Activated CD8-positive, alpha-beta memory T cell treated with anti-CD3 and anti-CD28 coated beads, Interleukin-2, amount 10 ng/mL, durations not matched to agents 7 days and 5 days (primary cell): ENCODE measurements at regions of chr10 and their contacts with region 1.

Region 1: DNA sequence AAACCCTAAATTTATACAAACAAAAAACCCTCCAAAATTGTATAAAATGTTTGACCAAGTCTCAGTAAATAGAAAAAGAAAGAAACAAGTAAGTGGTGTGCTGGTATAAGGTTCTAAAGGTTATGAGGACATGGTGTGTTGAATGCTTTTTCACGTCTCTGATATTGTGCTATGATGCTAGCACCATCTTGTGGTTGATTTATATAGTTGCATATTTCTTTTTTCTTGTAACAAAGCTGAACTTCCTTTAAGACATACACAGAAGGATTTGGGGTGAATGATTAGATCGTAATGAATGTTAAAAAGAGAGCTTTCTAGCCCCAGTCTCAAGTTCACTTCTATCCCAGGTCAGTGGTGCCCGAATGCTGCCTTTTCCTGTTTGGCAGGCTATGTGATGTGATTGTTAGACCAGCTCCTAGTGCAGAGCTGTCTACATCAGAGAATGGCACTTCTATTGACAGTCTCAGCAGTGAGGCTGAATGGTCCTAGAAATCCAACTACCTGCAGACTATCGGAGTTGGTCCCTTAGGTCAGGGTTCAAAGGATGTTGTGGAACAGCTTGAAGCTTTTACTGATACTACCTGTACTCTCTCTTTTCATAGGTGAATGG is 25.0 kb downstream of the VTI1A start:
- DNase-seq: no peak
- ATAC-seq: peak; percentile 67
- H3K4me3 Mint-ChIP-seq: no peak overlapping the region
- H3K27ac Mint-ChIP-seq: no peak overlapping the region
- H3K4me1 Mint-ChIP-seq: peaks cover 4% of the 10 kb centered on the region
- H3K27me3 Mint-ChIP-seq: no peaks in the 10 kb centered on the region

Region 2: GRCh38 chr10:112082120-112082519 is 389.9 kb before region 1 on chr10:
- CTCF ChIA-PET with region 1: no interaction called
- DNase-seq: no peak
- ATAC-seq: no peak
- H3K4me3 Mint-ChIP-seq: no peak overlapping the region
- H3K27ac Mint-ChIP-seq: no peak overlapping the region
- H3K4me1 Mint-ChIP-seq: no peaks in the 10 kb centered on the region
- H3K27me3 Mint-ChIP-seq: peaks cover 9% of the 10 kb centered on the region

Region 3: GRCh38 chr10:112361951-112362751 is 109.8 kb before region 1 on chr10:
- CTCF ChIA-PET with region 1: no interaction called
- DNase-seq: no peak
- ATAC-seq: no peak
- H3K4me3 Mint-ChIP-seq: no peak overlapping the region
- H3K27ac Mint-ChIP-seq: no peak overlapping the region
- H3K4me1 Mint-ChIP-seq: no peaks in the 10 kb centered on the region
- H3K27me3 Mint-ChIP-seq: no peaks in the 10 kb centered on the region

Region 4: GRCh38 chr10:112429147-112429546 is 42.8 kb before region 1 on chr10:
- CTCF ChIA-PET with region 1: no interaction called
- DNase-seq: no peak
- ATAC-seq: no peak
- H3K4me3 Mint-ChIP-seq: no peak overlapping the region
- H3K27ac Mint-ChIP-seq: peak overlapping the region; percentile 62
- H3K4me1 Mint-ChIP-seq: no peaks in the 10 kb centered on the region
- H3K27me3 Mint-ChIP-seq: no peaks in the 10 kb centered on the region

Region 5: DNA sequence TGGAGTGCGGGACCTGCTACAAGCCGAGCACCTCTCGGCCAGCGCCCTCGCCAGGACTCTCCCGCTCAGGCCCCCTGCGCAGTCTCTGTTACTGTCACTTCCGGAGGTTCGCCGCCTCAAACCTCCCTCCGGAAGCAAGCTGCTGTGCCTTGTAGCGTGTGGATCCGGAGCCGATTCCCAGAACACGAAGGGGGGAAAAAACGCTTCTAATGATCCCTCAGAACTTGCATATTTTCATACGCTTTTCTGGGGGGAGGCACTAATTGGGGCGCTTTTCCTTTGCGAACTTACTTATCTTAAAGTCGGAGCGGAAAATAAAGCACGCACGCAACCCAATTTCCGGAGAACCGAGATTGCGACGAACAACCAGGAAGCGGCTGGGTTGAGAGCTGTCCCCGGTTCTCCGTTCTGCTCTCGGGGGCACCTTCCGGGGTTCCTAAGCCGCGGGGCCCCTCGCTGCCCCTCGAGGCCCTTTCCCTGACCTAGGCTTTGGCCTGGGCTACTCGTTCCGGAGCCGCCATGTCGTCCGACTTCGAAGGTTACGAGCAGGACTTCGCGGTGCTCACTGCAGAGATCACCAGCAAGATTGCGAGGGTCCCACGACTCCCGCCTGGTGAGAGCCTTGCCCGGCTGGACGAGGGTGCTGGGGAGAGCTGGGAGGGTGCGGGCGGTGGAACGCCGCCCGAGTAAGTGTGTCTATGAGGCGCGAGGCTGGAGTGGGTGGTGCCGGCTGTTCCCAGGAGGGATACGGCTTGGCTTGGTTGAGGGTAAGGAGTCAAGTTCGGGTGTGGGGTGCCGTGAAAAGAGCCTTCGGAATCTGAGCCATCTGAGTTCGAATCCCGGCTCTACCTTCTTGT is 24.9 kb before region 1 on chr10 and contains the starts of genes VTI1A and ZDHHC6:
- CTCF ChIA-PET with region 1: interaction called, 17 read pairs
- DNase-seq: peak; percentile 91
- ATAC-seq: peak; percentile 92
- H3K4me3 Mint-ChIP-seq: peak within 1 kb of the TSS; percentile 93
- H3K27ac Mint-ChIP-seq: peak within 1 kb of the TSS; percentile 94
- H3K4me1 Mint-ChIP-seq: peaks cover 52% of the 10 kb centered on the region
- H3K27me3 Mint-ChIP-seq: no peaks in the 10 kb centered on the region
- total RNA-seq, gene VTI1A: 39.0 to 54.6 TPM
- total RNA-seq, gene ZDHHC6: 44.2 to 48.1 TPM

Region 6: GRCh38 chr10:112461029-112461887 is 10.7 kb before region 1 on chr10:
- CTCF ChIA-PET with region 1: interaction called, 13 read pairs
- DNase-seq: peak; percentile 54
- ATAC-seq: peak; percentile 42
- H3K4me3 Mint-ChIP-seq: no peak overlapping the region
- H3K27ac Mint-ChIP-seq: peak overlapping the region; percentile 52
- H3K4me1 Mint-ChIP-seq: peaks cover 10% of the 10 kb centered on the region
- H3K27me3 Mint-ChIP-seq: no peaks in the 10 kb centered on the region

Region 7: DNA sequence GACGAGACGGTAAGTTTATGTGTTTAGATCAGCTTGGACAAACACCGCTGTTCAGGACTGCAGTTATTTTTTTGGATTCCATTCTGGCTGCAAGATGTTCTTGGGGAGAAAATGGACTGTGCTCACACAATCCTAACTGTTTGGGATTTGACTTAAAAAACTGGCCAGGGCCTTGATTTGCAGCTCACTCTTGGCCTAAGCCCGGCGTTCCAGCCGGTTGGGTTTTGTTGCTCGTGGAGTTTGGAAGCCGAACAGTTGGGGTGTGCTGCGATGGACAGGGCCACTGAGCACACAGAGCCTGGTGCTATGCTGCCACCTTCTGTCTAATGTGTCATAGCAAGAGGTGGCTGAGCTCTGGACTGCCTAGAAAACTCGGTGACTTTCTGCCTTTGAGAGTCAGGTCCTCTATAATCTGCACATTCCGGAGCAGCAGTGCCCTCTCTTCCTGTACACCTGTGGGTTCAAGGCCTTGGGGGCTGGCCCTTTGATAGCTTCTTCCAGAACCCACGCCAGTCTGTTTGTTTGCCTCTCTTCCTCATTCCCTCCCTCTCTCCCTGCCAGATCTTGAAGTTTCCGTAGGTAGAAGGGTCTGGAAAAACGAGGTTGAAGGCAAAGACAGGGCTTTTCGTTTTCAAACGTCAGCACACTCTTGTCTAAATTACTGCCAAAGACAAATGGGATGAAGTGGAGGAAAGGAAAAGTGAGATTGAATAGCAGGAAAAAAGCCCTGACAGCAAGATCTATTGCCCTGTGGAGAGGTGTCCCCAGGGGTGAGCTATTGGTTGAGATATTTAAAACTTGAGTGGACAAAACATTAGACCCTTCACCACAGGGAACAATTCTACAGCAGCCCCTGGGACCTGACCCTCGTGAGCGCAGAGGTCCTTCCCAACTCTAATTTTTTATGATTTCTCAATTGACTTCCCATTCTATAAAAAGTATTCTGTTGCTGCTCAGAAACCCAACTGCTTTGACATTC is 913.3 kb after region 1 on chr10:
- CTCF ChIA-PET with region 1: interaction called, 15 read pairs
- DNase-seq: peak; percentile 74
- ATAC-seq: peak; percentile 92
- H3K4me3 Mint-ChIP-seq: no peak overlapping the region
- H3K27ac Mint-ChIP-seq: no peak overlapping the region
- H3K4me1 Mint-ChIP-seq: peaks cover 24% of the 10 kb centered on the region
- H3K27me3 Mint-ChIP-seq: peaks cover 63% of the 10 kb centered on the region